B cell (primary cell): ENCODE measurements at regions of chr22 and their contacts with region 1.

Region 1: GRCh38 chr22:41768430-41768829 is 32.0 kb upstream of the CCDC134 start:
- DNase-seq: no peak
- ATAC-seq: no peak
- H3K4me3 ChIP-seq: no peak overlapping the region
- H3K4me3 Mint-ChIP-seq: no peak overlapping the region
- H3K27ac ChIP-seq: no peak overlapping the region
- H3K27ac Mint-ChIP-seq: no peak overlapping the region
- H3K4me1 ChIP-seq: no peaks in the 10 kb centered on the region
- H3K4me1 Mint-ChIP-seq: no peaks in the 10 kb centered on the region
- H3K27me3 ChIP-seq: no peaks in the 10 kb centered on the region
- H3K27me3 Mint-ChIP-seq: peaks cover 4% of the 10 kb centered on the region
- CTCF ChIP-seq: no peak

Region 2: DNA sequence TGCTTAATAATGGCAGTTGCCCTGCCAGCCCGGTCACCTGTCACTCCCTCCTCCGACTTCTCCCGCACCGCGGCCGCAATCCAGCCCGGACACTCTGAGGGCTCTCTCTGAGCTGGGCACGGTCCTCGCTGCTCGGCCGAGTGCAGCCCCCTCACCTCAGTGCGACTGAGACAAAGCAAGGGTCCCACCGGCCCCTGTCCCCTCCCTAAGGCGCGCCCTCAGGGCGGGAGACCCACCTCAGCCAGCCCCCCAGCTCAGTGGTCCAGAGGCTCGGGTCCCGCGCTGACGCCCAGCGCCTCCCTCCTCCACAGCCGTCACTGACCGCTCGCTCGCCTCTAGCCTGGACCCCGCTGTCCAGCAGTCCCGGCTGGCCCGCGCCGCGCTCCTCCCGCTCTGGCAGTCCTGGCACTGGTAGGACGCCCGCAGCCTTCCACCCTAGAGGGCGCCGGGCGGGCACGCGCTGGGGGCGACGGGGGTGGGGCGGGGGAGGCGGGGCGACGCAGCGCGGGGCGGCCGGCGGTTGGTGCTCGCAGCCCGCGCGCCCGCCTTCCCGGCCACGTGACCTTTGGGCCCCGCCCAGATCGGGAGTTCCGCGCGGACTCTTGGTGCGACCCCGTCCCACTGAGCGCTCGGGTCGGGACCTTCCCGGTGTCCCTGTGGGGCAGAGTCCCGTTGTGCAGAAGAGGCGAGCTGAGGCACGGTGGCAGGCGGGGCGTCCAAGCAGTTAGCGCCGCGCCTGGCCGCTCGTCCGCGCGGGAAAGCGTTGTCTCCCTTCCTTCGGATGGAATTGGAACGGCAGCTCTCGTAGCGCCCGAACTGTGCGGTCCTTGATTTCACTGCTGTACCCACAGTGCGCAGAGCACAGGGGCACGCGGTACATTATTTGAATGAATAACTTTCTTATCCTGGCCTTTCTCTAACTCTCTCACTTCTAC is 571.1 kb before region 1 on chr22:
- CTCF ChIA-PET with region 1: no interaction called
- POLR2A ChIA-PET with region 1: no interaction called
- intact Hi-C with region 1: no loop called
- DNase-seq: peak; percentile 88
- ATAC-seq: peak; percentile 92
- H3K4me3 ChIP-seq: peak overlapping the region; percentile 73 to 85 (median 76)
- H3K4me3 Mint-ChIP-seq: peak overlapping the region; percentile 89
- H3K27ac ChIP-seq: no peak overlapping the region
- H3K27ac Mint-ChIP-seq: peak overlapping the region; percentile 2
- H3K4me1 ChIP-seq: peaks cover 7 to 17% of the 10 kb centered on the region in 2 donors
- H3K4me1 Mint-ChIP-seq: peaks cover 18% of the 10 kb centered on the region
- H3K27me3 ChIP-seq: peaks cover 0 to 7% (median 3%) of the 10 kb centered on the region in 4 experiments
- H3K27me3 Mint-ChIP-seq: peaks cover 3% of the 10 kb centered on the region
- CTCF ChIP-seq: peak; percentile 5

Region 3: DNA sequence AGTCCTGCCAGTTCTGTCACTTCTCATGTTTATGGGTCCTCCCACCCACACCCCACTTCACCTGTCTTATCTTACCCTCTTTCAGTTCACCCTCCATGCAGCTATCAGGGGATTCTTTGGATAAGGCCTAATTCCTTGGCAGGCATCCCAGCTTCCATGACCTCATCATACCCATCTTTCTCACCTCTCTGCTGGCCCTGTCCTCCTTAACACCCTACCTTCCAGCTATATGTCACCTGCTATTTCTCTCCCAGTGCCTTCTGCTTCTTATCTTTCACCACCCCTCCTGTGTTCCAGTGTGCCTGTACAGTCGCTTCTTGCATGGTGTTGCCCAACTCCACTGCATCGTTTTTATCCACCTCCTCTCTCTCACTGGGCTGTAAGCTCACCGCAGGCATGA is 108.0 kb before region 1 on chr22:
- CTCF ChIA-PET with region 1: no interaction called
- POLR2A ChIA-PET with region 1: no interaction called
- intact Hi-C with region 1: no loop called
- DNase-seq: no peak
- ATAC-seq: no peak
- H3K4me3 ChIP-seq: no peak overlapping the region
- H3K4me3 Mint-ChIP-seq: no peak overlapping the region
- H3K27ac ChIP-seq: peak overlapping the region in 1 of 2 donors; percentile 19
- H3K27ac Mint-ChIP-seq: no peak overlapping the region
- H3K4me1 ChIP-seq: no peaks in the 10 kb centered on the region
- H3K4me1 Mint-ChIP-seq: no peaks in the 10 kb centered on the region
- H3K27me3 ChIP-seq: no peaks in the 10 kb centered on the region
- H3K27me3 Mint-ChIP-seq: no peaks in the 10 kb centered on the region
- CTCF ChIP-seq: no peak

Region 4: DNA sequence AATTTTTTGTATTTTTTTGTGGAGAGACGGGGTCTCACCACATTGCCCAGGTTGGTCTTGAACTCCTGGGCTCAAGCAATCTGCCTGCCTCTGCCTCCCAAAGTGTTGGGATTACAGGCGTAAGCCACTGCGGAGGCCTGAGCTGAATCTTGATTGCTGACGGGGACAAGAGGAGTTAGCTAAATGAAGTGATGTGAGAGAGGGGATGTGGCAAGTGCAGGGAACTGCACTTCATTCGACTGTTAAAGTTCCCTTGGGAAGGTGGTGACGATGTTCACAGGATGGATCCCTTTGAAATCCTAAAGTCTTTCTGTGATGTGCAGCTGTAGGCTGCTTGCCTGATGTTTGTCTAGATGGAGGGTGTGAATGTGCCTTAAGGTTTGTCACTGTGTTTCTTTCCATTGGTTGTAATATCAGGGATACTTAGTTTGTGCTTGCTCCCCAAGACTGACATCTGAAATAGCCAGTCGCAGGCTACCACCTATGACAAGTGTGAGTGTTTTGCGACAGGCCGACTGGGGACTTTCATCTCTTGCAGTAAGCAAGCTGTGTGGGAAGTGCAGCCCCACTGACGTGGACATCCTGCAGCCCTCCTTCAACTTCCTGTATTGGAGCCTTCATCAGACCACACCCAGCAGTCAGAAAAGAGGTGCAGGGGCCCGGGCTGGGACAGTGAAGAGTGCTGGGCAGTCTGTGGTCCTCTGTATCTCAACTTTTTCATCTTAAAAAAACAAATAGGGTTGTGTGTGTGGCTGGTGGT is 12.5 kb after region 1 on chr22:
- CTCF ChIA-PET with region 1: interaction called, 8 read pairs
- POLR2A ChIA-PET with region 1: no interaction called
- intact Hi-C with region 1: loop called (anchors 2 kb)
- DNase-seq: peak; percentile 94
- ATAC-seq: peak; percentile 96
- H3K4me3 ChIP-seq: peak overlapping the region; percentile 47 to 76 (median 60)
- H3K4me3 Mint-ChIP-seq: peak overlapping the region; percentile 88
- H3K27ac ChIP-seq: peak overlapping the region; percentile 90 to 95
- H3K27ac Mint-ChIP-seq: peak overlapping the region; percentile 98
- H3K4me1 ChIP-seq: peaks cover 26 to 31% of the 10 kb centered on the region in 2 donors
- H3K4me1 Mint-ChIP-seq: peaks cover 37% of the 10 kb centered on the region
- H3K27me3 ChIP-seq: no peaks in the 10 kb centered on the region
- H3K27me3 Mint-ChIP-seq: no peaks in the 10 kb centered on the region
- CTCF ChIP-seq: no peak